ENCODE measurements at regions of chr17 and their contacts with region 1.

Region 1: DNA sequence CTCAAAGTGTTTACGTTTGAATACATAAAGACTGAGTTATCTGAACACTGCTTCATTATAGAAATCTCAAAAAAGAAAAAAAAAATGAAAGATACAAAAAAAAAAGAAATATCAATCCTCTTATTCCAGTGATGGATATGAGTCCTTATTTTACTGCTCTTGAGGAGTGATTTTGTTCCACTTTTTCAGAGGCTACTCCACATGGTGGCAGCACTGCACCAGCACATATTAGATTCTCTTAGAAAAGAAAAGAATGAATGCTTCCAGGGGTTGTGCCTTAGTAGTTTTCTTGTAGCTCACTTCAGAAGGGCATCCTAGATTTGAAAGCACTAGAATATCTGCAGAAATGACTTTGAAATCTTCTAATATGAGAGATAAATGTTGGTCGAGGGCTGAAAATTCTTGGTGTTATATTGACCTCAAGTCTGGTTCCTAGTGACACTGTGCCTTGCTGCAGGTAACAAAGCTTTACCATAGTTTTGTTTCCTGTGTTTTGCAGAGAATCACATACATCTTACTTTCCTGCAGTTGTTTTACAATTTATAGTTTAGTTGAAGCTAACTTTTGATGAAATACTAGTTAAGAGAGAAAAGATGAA is 25.9 kb downstream of the AP2B1 start:
- DNase-seq: peak; percentile 36
- H3K4me3 Mint-ChIP-seq: no peak overlapping the region
- H3K27ac Mint-ChIP-seq: no peak overlapping the region
- H3K4me1 Mint-ChIP-seq: no peaks in the 10 kb centered on the region
- H3K27me3 Mint-ChIP-seq: no peaks in the 10 kb centered on the region
- CTCF ChIP-seq: peak; percentile 48

Region 2: GRCh38 chr17:35587074-35587971 is 25.7 kb before region 1 on chr17 and contains the start of gene AP2B1:
- CTCF ChIA-PET with region 1: interaction called, 27 read pairs
- POLR2A ChIA-PET with region 1: interaction called, 6 read pairs
- intact Hi-C with region 1: no loop called
- DNase-seq: peak; percentile 95
- H3K4me3 Mint-ChIP-seq: peak within 1 kb of the TSS; percentile 97
- H3K27ac Mint-ChIP-seq: peak within 1 kb of the TSS; percentile 99
- H3K4me1 Mint-ChIP-seq: peaks cover 18% of the 10 kb centered on the region
- H3K27me3 Mint-ChIP-seq: no peaks in the 10 kb centered on the region
- CTCF ChIP-seq: no peak
- total RNA-seq, gene AP2B1: 227 and 229 TPM in 2 replicates

Region 3: DNA sequence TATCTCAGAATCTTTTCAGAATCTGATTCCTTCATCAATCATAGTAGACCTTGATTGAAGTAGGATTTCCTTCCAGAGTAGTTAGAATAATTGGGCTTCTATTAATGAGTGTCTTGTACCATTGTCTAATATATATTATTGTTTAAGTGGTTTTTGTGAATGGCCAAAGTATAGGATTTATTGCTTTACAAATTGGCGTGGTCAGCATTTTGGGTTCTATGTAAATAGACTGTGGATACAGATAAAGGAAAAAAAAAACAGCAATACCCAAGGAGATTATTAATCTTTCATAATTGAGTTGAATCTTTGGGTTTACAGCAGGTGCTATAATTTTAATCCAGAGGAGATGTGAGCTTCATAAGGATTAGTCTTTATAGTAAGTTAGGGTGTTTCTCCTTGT is 38.4 kb after region 1 on chr17:
- CTCF ChIA-PET with region 1: interaction called, 17 read pairs
- POLR2A ChIA-PET with region 1: interaction called, 3 read pairs
- intact Hi-C with region 1: no loop called
- DNase-seq: no peak
- H3K4me3 Mint-ChIP-seq: no peak overlapping the region
- H3K27ac Mint-ChIP-seq: no peak overlapping the region
- H3K4me1 Mint-ChIP-seq: no peaks in the 10 kb centered on the region
- H3K27me3 Mint-ChIP-seq: no peaks in the 10 kb centered on the region
- CTCF ChIP-seq: no peak

Region 4: DNA sequence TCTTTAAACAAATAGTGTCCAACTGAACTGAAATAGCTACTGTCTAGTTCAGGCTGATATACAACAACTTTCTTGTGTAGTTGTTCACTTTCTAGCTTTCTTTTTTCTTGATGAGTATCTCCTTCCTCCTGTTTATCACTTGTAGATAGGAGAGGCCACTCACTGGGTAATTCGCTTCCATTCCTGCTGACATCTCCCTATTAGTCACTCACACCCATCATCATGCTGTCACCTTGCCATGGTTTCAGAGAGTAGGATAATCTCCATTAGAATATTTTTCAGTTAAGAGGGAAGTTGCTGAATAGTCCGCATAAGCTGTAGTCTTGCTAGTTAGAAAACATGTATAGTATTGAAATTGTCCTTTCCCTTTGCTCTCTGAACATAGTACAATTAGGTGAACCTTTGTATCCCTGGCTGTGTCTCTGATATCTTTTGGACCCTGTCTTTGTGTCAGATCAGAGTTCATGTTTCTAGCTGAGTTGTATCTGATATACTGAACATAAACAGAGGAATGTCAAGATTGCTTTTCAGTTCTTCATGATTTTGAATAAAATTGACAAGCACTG is 54.0 kb after region 1 on chr17:
- CTCF ChIA-PET with region 1: interaction called, 14 read pairs
- POLR2A ChIA-PET with region 1: interaction called, 3 read pairs
- intact Hi-C with region 1: no loop called
- DNase-seq: no peak
- H3K4me3 Mint-ChIP-seq: no peak overlapping the region
- H3K27ac Mint-ChIP-seq: no peak overlapping the region
- H3K4me1 Mint-ChIP-seq: no peaks in the 10 kb centered on the region
- H3K27me3 Mint-ChIP-seq: no peaks in the 10 kb centered on the region
- CTCF ChIP-seq: no peak

Region 5: GRCh38 chr17:35726127-35726952 is 113.3 kb after region 1 on chr17:
- CTCF ChIA-PET with region 1: interaction called, 17 read pairs
- POLR2A ChIA-PET with region 1: no interaction called
- intact Hi-C with region 1: no loop called
- DNase-seq: peak; percentile 76
- H3K4me3 Mint-ChIP-seq: no peak overlapping the region
- H3K27ac Mint-ChIP-seq: peak overlapping the region; percentile 77
- H3K4me1 Mint-ChIP-seq: peaks cover 25% of the 10 kb centered on the region
- H3K27me3 Mint-ChIP-seq: no peaks in the 10 kb centered on the region
- CTCF ChIP-seq: no peak

Region 6: DNA sequence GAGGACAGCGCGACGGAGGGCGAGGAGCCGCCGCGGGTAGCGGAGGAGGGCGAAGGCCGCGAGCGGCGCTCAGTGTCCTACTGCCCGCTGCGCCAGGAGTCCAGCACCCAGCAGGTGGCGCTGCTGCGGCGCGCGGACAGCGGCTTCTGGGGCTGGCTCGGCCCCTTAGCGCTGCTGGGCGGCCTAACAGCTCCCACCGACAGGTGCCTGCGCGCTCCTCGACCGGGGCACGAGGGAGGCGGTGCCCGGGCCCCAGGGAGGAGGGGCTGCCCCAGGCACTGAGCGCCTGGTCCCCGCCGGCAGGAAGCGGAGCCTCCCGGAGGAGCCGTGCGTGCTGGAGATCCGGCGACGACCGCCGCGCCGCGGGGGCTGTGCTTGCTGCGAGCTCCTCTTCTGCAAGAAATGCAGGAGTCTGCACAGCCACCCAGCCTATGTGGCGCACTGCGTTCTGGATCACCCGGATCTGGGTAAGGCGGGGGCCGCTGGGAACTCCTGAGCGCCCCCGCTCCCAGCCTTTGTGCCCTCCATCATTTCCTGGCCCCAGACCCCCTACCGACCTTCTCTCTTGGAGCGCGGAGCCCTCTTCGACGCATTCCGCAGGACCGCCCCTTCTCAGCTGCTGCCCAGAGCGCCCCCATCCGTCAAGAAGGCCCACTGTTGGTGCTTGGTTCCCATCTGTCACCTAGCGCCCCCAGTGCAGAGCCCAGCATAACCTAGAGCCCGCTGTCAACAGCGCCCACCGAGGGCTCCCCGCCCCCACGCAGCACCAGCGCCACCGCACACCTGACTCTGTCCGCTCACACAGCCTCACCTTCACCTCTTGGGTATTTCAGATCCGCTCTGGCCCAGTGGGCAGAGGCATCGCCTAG is 151.3 kb after region 1 on chr17:
- CTCF ChIA-PET with region 1: interaction called, 11 read pairs
- POLR2A ChIA-PET with region 1: no interaction called
- intact Hi-C with region 1: no loop called
- DNase-seq: peak; percentile 87
- H3K4me3 Mint-ChIP-seq: peak overlapping the region; percentile 75
- H3K27ac Mint-ChIP-seq: peak overlapping the region; percentile 87
- H3K4me1 Mint-ChIP-seq: peaks cover 13% of the 10 kb centered on the region
- H3K27me3 Mint-ChIP-seq: no peaks in the 10 kb centered on the region
- CTCF ChIP-seq: peak; percentile 92

Region 7: DNA sequence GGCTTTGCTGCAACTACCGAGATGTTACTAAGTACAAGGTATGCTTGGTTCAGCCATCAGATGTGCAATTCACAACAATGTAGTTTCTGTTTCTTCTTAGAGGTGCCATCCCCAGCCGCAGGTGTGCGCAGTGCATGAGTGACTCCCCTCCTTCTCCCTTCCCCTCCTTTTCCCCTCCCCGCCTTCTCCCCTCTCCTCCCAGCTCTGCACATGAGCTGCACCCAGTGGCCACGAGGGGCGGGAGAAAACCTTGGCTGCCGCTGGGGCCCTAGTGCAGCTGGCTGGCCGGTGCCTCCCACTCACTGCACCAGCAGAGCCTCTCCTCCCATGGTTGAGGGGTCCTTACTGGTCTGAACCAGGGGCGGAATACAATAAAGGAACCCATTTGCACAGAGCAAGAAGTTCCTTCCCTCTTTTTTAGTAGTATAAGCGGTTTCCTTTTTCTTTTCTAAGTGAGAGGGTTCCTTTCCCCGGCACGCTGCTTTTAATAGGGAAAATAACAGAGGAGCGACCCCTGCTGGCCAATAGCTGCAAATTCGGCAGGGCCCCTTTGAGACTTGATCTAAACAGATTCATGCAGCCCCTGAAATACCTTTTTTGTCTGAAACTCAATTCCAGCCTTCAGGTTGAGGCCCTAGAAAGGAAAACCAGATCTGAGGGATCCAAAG is 396.1 kb after region 1 on chr17:
- CTCF ChIA-PET with region 1: no interaction called
- POLR2A ChIA-PET with region 1: no interaction called
- intact Hi-C with region 1: no loop called
- DNase-seq: peak; percentile 34
- H3K4me3 Mint-ChIP-seq: no peak overlapping the region
- H3K27ac Mint-ChIP-seq: no peak overlapping the region
- H3K4me1 Mint-ChIP-seq: no peaks in the 10 kb centered on the region
- H3K27me3 Mint-ChIP-seq: peaks cover 52% of the 10 kb centered on the region
- CTCF ChIP-seq: peak; percentile 32

Measured in MCF 10A (cell line).